ENCODE measurements at regions of chr9 and their contacts with region 1.

Region 1: DNA sequence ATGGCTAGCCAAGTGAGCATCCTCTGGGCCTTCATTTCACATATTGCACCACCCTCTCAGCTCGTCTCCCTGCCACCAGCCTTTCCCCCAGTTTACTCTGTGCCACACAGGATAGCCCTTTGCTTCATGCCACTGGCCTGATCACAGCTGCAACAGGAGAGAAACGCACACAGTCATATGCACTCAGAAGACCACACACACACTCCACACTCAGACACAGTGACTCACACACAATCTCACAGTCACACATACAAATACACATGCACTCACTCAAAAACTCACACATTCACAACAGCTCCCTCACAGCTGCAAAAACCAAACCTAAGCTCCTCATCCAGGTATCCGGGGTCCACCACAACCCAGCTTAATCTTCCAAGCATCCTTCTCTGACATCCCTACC is 38.7 kb downstream of the TTC39B start:
- DNase-seq: no peak

Region 2: GRCh38 chr9:15068261-15068660 is 200.1 kb before region 1 on chr9:
- intact Hi-C with region 1: no loop called
- DNase-seq: no peak

Region 3: DNA sequence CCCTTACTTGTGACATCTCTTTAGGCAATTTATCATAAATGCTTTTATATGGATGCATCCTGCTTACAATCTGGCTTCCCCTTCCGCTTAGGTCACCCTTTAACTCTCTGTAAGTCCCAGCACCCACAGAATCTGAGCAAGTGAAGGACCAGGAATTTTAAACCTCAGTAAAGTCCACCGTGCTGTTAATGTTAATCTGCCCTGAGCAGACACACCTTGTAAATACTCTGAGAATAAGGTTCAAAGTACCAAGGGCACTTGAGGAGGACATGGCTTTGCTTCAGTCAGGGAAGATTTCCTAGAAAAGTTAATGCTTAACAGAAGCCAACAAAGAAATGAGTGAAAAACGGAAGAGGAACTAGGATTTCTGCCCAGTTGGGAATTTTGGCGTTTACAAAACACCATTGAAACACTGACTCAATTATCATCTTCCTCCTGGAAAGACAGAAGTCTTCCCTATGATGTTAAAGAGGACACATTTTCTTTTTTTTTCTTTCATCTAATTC is 65.1 kb after region 1 on chr9:
- intact Hi-C with region 1: no loop called
- DNase-seq: no peak

Region 4: DNA sequence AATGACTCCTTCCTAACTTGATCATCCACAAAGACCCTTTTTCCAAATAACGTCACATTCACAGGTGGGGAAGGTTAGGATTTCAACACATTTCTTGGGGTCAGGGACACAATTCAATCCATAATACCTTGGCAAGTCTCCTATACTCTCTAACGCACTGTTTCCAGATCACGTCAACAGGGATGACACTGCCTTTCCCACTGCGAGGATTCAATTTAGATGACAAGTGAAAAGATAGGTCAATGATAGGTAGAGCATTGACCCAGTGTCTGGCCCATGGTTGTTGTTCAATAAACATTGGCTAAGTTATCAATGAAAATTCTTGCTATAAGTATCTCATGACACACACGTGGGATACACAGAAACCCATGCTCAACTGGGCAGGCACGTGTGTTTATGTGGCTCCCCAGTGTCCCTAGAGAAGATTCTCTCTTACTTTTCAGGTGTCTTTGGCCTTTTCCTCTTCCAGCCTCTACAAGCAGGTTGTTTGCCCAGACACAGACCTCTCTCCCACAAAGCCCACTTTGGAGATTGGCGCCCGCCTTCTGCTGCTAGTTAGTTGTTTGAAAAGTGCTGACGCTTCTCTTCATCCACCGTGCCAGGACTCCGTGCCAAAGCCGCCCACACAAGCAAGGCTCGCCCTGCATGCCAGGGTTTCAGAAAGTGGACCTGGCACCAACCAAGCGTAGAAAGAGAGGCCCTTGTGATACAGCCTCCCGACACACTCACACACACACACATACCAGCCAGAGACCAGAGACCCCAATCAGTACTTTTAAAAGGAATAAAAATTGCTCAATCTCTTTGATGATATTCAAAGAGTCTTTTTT is 1007.7 kb after region 1 on chr9:
- intact Hi-C with region 1: loop called in 1 of 2 experiments (anchors 10 kb)
- DNase-seq: no peak

Region 5: DNA sequence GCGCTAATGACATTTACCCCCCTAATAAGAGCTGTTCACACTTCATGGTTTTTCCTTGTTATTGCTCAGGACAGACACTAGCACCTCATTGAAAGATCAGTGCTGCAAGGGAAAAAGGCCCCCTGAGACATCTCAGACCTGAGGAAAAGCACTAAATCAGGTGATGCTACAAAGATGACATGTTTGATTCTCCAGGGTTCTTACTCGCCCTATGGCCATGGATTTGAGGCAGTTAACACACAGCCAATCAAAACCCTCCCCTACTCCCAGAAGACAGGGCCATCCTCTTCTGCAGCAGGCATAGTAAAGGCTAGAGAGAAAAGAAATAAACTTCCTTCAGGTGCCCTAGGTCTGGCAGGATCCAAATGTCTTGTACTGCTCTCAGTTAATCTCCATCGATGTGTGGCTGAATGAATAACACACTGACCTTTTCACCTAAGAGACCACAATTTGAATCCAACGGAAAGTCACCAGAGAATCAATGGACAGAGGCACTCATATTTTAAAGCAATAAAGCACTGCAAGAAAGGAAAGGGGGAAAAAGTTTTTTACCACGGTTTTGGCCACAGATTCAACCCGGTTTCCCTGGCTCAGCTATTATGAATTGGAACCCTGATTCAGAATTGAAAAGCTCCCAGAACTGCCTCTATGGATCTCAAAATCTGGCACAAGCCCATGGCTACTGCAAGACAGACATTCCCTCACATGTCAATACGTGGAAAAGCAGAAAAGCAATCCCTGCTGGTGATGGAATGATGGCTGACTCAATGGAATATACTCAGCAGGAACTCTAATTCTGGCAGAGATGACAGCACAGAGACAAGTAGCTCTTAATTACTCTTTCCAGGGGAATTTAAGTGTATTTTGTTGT is 1272.7 kb after region 1 on chr9:
- intact Hi-C with region 1: no loop called
- DNase-seq: no peak

Measured in posterior vena cava (tissue), 2 donors.